Mammary epithelial cell (primary cell): ENCODE measurements at regions of chr2 and their contacts with region 1.

Region 1: DNA sequence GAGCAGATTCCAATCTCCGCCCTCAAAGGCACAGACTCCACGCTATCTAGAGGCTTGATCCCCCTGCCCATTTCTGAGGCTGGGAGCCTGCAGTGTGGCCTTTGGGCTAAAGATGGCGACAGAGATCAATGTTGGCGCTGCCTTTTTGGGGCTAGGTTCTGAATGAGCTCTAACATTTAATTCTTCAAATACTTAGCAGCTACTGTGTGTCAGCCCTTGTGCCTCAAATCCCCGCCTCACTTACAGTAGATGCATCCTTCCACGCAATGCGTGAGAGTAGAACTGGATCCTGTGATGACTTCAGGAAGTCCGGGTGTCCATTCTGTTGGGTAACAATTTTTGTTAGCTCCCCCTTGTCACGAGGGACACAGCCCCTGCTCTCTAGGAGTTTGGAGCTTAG is 12.4 kb downstream of the IL1F10 start:
- DNase-seq: peak; percentile 47
- H3K4me3 ChIP-seq: no peak overlapping the region
- H3K27ac ChIP-seq: no peak overlapping the region
- H3K4me1 ChIP-seq: peaks cover 48% of the 10 kb centered on the region
- H3K27me3 ChIP-seq: no peaks in the 10 kb centered on the region
- CTCF ChIP-seq: peak; percentile 92 to 94

Region 2: DNA sequence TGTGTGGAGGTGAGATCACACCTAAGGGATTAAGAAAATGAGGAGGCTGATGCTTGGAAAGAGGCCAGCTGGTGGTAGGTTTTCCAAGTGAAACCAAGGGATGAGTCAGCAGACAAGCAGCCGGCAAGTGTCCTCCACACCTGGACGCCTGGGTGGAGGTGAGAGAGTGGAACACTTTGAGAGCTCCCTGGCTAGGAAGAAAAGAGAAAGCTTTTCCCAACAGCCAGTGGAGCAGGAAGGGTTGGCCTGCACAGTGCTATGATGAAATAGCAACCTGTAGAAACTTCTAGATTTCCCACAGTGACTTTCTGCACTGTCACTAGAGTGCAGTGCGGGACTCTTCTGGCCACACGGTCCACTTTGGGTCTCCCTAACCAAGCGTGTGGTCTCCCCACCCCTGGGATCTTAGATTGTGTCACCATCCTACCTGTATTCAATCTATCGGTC is 188.7 kb before region 1 on chr2:
- CTCF ChIA-PET with region 1: no interaction called
- dilution Hi-C with region 1: no loop called
- in situ Hi-C with region 1: no loop called
- intact Hi-C with region 1: no loop called
- DNase-seq: peak; percentile 99
- H3K4me3 ChIP-seq: no peak overlapping the region
- H3K27ac ChIP-seq: peak overlapping the region; percentile 69
- H3K4me1 ChIP-seq: peaks cover 32% of the 10 kb centered on the region
- H3K27me3 ChIP-seq: no peaks in the 10 kb centered on the region
- CTCF ChIP-seq: peak in 1 of 2 donors; percentile 23

Region 3: DNA sequence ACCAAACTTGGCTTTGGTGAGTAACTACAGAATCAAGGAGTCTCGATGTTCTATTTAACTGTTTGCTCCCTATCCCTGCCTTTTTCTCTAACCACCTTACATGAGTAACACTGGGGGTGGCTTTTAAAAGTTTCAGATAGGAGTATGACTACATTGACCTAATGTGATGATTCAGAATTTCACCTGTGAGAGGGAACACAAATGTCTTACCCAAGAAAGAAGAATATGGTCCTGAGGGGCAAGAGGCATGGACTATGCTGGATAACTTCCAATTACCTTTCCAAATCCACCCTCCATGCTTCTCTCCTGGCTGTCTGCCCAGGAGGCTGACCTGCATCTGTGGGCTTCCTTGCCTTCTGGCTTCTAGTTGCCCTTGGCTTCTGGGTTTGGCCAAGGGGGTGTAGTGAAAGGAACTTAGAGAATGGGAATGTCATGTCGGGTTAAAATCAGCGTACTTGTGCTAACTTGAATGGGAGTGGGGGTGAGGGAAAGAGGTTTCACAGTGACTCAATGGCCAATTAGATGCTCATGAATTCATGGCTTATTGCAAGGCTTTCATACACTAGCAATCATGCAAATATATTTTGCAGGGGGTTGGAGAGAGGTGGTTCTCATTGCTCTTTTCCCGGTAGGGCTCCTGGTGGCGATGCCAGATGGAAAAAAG is 107.6 kb before region 1 on chr2:
- CTCF ChIA-PET with region 1: no interaction called
- dilution Hi-C with region 1: no loop called
- in situ Hi-C with region 1: no loop called
- intact Hi-C with region 1: loop called (anchors 5 kb)
- DNase-seq: peak; percentile 97
- H3K4me3 ChIP-seq: no peak overlapping the region
- H3K27ac ChIP-seq: peak overlapping the region; percentile 76
- H3K4me1 ChIP-seq: peaks cover 31% of the 10 kb centered on the region
- H3K27me3 ChIP-seq: no peaks in the 10 kb centered on the region
- CTCF ChIP-seq: no peak

Region 4: DNA sequence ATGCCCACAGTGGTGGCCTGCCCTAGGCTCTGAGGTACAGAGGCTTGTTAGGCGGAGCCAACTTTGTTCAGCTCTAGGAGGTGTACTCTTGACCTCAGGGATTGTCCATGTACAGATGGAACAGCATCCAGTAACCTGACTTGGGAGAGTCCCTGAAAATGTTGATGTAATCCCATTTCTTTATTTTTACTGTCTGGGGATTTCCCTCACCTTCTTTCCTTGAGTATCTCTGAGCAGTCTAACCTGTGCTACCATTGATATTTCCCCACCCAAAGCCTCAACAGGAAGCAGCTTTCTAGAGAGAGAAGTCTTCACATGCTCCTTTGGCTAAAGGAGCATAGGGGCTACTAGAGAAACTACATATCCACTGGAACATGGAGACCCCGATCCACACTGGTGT is 64.5 kb before region 1 on chr2:
- CTCF ChIA-PET with region 1: no interaction called
- dilution Hi-C with region 1: no loop called
- in situ Hi-C with region 1: no loop called
- intact Hi-C with region 1: no loop called
- DNase-seq: peak; percentile 43
- H3K4me3 ChIP-seq: no peak overlapping the region
- H3K27ac ChIP-seq: no peak overlapping the region
- H3K4me1 ChIP-seq: no peaks in the 10 kb centered on the region
- H3K27me3 ChIP-seq: no peaks in the 10 kb centered on the region
- CTCF ChIP-seq: no peak

Region 5: GRCh38 chr2:113041871-113042508 is 38.1 kb before region 1 on chr2:
- CTCF ChIA-PET with region 1: interaction called, 5 read pairs
- dilution Hi-C with region 1: no loop called
- in situ Hi-C with region 1: no loop called
- intact Hi-C with region 1: loop called (anchors 1 kb)
- DNase-seq: peak; percentile 33
- H3K4me3 ChIP-seq: no peak overlapping the region
- H3K27ac ChIP-seq: no peak overlapping the region
- H3K4me1 ChIP-seq: no peaks in the 10 kb centered on the region
- H3K27me3 ChIP-seq: no peaks in the 10 kb centered on the region
- CTCF ChIP-seq: peak; percentile 61 to 83

Region 6: GRCh38 chr2:113148606-113149560 is 68.7 kb after region 1 on chr2:
- CTCF ChIA-PET with region 1: no interaction called
- dilution Hi-C with region 1: no loop called
- in situ Hi-C with region 1: no loop called
- intact Hi-C with region 1: no loop called
- DNase-seq: peak; percentile 79
- H3K4me3 ChIP-seq: no peak overlapping the region
- H3K27ac ChIP-seq: peak overlapping the region; percentile 28
- H3K4me1 ChIP-seq: peaks cover 26% of the 10 kb centered on the region
- H3K27me3 ChIP-seq: no peaks in the 10 kb centered on the region
- CTCF ChIP-seq: no peak

Region 7: GRCh38 chr2:113390124-113390849 is 310.2 kb after region 1 on chr2:
- CTCF ChIA-PET with region 1: no interaction called
- dilution Hi-C with region 1: no loop called
- in situ Hi-C with region 1: no loop called
- intact Hi-C with region 1: loop called (anchors 5 kb)
- DNase-seq: peak; percentile 51
- H3K4me3 ChIP-seq: no peak overlapping the region
- H3K27ac ChIP-seq: no peak overlapping the region
- H3K4me1 ChIP-seq: no peaks in the 10 kb centered on the region
- H3K27me3 ChIP-seq: no peaks in the 10 kb centered on the region
- CTCF ChIP-seq: peak; percentile 93 to 96